ENCODE measurements at regions of chr16 and their contacts with region 1.

Region 1: DNA sequence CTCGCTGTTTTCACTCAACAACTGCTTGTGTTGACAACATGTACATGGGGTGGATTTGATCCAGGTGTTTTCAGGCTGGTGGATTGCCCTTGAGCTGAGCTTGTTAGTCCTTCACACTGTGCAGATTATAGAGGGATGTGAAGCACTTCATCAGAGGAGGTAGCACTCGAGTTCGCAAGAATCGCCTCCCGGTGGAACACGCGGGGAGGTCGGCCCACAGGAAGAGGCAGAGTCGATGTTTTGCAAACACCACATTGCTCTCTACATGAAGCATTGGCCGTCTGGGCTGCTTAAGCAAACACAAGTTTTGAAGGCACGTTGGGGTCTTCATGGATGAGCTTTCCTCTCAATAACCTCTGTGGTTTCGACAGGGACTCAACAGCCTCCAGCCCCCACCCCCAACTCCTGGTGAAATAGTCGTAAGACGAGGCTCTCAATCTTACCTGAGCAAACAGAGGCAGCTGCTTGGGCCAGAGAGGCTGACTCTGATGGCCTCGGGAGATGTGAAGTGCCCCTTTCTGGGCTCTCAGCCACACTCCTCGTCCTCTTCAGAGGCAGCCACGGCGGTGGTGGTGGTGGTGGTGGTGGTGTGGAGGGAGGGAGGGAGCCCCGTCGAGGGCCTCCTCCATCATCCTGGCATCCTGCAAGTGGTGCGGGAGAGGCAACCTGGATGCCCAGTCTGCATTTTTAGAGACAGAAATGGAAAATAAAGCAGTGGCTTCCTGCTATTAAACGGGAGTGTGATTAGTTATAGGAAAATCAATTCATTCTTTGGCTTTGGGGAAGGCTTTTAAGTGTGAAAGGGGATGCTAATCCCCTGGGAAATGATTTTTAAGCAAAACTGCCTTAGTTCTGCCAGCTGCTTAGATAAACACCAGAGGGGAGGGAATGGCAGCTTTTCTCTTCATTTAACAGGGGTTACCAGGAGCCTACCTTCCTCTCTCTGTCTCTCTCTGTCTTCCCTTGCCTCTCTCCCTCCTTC is 552.5 kb upstream of the EEF2KMT start:
- DNase-seq: no peak
- H3K4me3 ChIP-seq: no peak overlapping the region
- H3K27ac ChIP-seq: no peak overlapping the region
- H3K4me1 ChIP-seq: no peaks in the 10 kb centered on the region
- H3K27me3 ChIP-seq: no peaks in the 10 kb centered on the region

Region 2: DNA sequence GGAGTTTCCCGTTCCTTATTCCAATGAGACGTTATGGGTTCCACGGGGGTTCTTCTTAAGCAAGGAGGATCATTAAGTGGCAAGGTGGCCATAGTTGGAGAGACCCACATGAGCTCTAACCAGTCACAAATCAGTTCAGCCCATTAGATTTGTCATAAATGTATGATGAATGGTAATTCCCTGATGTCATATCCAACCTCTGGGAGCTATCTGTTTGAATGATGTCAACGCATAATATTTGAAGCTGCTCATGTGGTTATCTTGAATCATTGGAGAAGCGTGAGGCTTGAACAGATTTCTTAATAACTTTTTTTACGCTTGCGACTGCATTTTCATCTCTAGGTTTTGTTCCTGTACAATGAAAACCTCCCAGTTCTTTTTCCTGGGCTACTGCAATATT is 282.1 kb before region 1 on chr16:
- in situ Hi-C with region 1: no loop called
- DNase-seq: no peak
- H3K4me3 ChIP-seq: no peak overlapping the region
- H3K27ac ChIP-seq: no peak overlapping the region
- H3K4me1 ChIP-seq: no peaks in the 10 kb centered on the region
- H3K27me3 ChIP-seq: no peaks in the 10 kb centered on the region

Region 3: GRCh38 chr16:5541356-5541755 is 108.7 kb before region 1 on chr16:
- in situ Hi-C with region 1: no loop called
- DNase-seq: no peak
- H3K4me3 ChIP-seq: no peak overlapping the region
- H3K27ac ChIP-seq: no peak overlapping the region
- H3K4me1 ChIP-seq: no peaks in the 10 kb centered on the region
- H3K27me3 ChIP-seq: no peaks in the 10 kb centered on the region

Region 4: DNA sequence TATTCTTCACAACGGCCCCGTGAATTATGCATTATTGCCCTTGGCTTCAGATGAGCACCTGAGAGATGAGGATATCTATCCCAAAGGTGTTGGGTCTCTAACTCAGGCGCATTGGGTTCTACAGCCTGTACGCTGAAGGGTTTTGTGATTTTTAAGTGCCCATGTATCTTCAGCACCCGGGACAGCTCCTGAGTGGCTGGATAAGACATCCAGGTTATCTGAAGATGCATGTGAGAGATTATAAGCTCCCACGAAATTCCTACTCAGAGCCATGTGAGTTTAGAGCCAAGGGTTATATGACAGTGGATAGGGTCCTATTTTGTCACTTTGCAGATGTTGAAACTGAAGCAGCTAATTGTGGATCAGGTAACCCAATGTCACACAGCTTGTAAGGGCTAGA is 59.8 kb after region 1 on chr16:
- in situ Hi-C with region 1: loop called (anchors 10 kb)
- DNase-seq: peak; percentile 8
- H3K4me3 ChIP-seq: no peak overlapping the region
- H3K27ac ChIP-seq: no peak overlapping the region
- H3K4me1 ChIP-seq: no peaks in the 10 kb centered on the region
- H3K27me3 ChIP-seq: no peaks in the 10 kb centered on the region